Ascending aorta (tissue), 2 donors: ENCODE measurements at regions of chr2 and their contacts with region 1.

Region 1: GRCh38 chr2:241637000-241637791 is at the starts of genes ATG4B and THAP4:
- DNase-seq: peak; percentile 26 to 88
- H3K4me3 ChIP-seq: peak within 1 kb of the TSS; percentile 89 to 100
- H3K27ac ChIP-seq: peak within 1 kb of the TSS; percentile 99
- H3K4me1 ChIP-seq: peaks cover 17 to 29% of the 10 kb centered on the region in 2 donors
- H3K27me3 ChIP-seq: no peaks in the 10 kb centered on the region
- CTCF ChIP-seq: no peak
- total RNA-seq, gene ATG4B: 225 TPM
- total RNA-seq, gene THAP4: 80.8 TPM

Region 2: DNA sequence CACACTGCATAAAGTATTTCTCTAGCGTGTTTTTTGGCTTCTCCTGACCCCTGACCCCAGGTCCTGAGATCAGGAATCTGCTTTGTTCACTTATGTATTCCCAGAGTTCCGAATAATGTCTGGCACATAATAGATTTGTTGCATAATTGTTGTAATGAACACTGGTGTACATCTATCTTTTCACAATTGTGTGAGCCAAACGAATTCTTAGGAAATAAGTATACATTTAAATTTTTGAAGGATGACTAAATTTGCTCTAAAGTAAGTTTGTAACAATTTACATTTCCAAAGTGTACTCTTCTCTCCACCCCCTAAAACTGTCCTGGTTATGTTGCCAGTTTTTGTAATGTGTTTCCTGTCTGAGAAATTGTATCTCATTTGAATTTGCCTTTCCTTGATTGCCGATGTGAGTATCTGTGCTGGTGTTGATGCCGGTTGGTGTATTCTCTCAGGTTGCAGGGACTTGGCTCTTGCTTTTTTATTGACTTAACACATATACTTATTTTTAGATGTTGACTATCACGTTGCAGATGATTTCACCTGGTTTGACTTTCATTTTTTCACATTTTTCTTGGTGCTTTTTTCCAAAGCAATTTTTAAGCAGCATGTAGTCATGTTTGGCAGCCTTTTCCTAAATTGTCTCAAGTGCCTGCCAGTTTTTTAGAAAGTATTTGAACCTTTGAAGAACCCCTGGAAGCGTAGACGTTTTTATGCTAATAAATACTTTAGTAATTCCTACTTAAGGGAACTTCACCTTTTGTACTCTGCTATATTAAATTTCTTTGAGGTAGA is 297.2 kb before region 1 on chr2:
- intact Hi-C with region 1: no loop called
- DNase-seq: no peak
- H3K4me3 ChIP-seq: no peak overlapping the region
- H3K27ac ChIP-seq: peak overlapping the region; percentile 45 to 54
- H3K4me1 ChIP-seq: no peaks in the 10 kb centered on the region
- H3K27me3 ChIP-seq: no peaks in the 10 kb centered on the region
- CTCF ChIP-seq: no peak

Region 3: DNA sequence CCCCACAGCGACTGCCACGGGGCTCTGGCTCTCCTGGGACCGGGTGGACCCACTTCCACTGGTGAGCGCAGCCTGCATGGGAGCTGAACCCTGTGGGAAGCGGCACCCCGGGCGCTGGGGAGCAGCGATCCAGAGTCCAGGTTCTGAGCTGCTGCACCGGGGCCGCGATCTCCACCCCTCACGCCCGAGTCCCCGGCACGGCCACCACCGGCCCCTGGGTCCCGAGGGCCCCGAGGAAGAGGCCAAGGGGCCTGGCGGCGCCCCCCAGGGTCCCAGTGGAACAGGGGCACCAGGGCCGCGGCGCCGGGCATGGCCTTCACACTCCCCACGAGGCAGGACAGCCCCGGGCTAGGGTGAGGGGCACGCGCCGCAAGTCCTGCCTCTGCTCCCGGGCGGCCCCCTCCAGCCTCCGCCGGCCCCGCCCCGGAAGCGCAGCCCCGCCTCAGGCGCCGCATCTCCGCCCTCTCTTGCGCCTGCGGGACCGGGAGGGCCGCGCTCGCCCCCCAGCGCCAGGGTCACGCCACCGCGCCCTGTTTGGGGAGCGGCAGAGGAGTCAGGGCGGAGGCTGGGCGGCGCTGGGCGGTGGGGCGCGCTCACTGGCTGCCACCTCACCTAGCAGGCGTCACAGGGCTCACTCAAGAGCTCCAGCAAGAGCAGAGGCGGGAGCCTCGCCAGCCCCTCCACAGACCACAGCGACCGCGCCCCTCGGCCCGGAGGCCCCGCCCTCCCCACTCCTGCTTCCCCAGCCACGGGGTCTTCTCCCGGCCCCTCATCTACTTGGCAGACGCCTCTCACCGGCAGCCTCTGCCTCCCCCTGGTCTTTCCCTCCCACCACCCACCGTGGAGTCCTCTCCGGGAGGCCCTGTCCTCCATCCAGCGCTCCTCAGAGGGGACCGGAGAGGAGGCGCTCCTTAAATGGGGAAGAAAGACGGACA is 27.1 kb before region 1 on chr2:
- intact Hi-C with region 1: loop called (anchors 1 kb)
- DNase-seq: peak; percentile 49 to 93
- H3K4me3 ChIP-seq: peak overlapping the region; percentile 47 to 89
- H3K27ac ChIP-seq: peak overlapping the region; percentile 86 to 92
- H3K4me1 ChIP-seq: peaks cover 0 to 3% of the 10 kb centered on the region in 2 donors
- H3K27me3 ChIP-seq: no peaks in the 10 kb centered on the region
- CTCF ChIP-seq: peak; percentile 47 to 75 (median 69)

Region 4: GRCh38 chr2:241702132-241703031 is 65.2 kb after region 1 on chr2:
- intact Hi-C with region 1: loop called (anchors 1 kb)
- DNase-seq: peak; percentile 15 to 87
- H3K4me3 ChIP-seq: peak overlapping the region; percentile 75 to 82
- H3K27ac ChIP-seq: peak overlapping the region; percentile 93 to 96
- H3K4me1 ChIP-seq: peaks cover 6 to 14% of the 10 kb centered on the region in 2 donors
- H3K27me3 ChIP-seq: no peaks in the 10 kb centered on the region
- CTCF ChIP-seq: peak; percentile 20 to 33 (median 27)